ENCODE measurements at regions of chr1 and their contacts with region 1.

Region 1: DNA sequence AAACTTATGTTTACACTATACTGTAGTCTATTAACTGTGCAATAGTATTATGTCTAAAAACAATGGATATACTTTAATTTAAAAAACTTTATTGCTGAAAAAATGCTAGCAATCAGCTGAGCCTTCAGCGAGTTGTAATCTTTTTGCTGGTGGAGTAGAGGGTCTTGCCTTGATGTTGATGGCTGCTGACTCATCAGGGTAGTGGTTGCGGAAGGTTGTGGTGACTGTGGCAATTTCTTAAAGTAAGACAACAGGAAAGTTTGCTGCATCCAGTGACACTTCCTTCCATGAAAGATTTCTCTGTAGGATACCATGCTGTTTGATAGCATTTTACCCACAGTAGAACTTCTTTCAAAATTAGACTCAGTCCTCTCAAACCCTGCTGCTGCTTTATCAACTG is 234.7 kb upstream of the CSF3R start:
- DNase-seq: no peak
- ATAC-seq: no peak
- H3K4me3 Mint-ChIP-seq: no peak overlapping the region
- H3K27ac Mint-ChIP-seq: no peak overlapping the region
- H3K4me1 Mint-ChIP-seq: no peaks in the 10 kb centered on the region
- H3K27me3 Mint-ChIP-seq: peaks cover 20% of the 10 kb centered on the region
- CTCF ChIP-seq: no peak

Region 2: DNA sequence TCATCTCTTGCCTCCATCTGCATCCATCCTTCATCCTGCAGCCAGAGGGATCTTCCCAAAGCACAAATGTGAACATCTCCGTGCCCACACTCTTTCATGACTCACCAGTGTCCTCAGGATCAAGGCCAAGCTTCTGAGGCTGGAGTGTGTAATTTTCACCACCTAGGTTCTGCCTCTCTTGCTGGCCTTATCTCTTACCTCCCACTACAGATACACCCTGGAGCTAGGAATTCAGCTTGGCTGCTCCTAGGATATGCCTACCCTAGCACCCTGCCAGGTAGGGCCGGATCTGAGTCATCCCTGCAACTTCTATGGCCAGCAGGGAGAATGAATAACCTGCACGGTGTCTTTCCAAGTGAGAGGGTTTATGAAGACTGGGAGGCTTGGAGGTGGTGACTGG is 26.1 kb before region 1 on chr1:
- CTCF ChIA-PET with region 1: no interaction called
- POLR2A ChIA-PET with region 1: no interaction called
- intact Hi-C with region 1: no loop called
- DNase-seq: no peak
- ATAC-seq: no peak
- H3K4me3 Mint-ChIP-seq: no peak overlapping the region
- H3K27ac Mint-ChIP-seq: no peak overlapping the region
- H3K4me1 Mint-ChIP-seq: no peaks in the 10 kb centered on the region
- H3K27me3 Mint-ChIP-seq: peaks cover 25% of the 10 kb centered on the region
- CTCF ChIP-seq: no peak

Region 3: DNA sequence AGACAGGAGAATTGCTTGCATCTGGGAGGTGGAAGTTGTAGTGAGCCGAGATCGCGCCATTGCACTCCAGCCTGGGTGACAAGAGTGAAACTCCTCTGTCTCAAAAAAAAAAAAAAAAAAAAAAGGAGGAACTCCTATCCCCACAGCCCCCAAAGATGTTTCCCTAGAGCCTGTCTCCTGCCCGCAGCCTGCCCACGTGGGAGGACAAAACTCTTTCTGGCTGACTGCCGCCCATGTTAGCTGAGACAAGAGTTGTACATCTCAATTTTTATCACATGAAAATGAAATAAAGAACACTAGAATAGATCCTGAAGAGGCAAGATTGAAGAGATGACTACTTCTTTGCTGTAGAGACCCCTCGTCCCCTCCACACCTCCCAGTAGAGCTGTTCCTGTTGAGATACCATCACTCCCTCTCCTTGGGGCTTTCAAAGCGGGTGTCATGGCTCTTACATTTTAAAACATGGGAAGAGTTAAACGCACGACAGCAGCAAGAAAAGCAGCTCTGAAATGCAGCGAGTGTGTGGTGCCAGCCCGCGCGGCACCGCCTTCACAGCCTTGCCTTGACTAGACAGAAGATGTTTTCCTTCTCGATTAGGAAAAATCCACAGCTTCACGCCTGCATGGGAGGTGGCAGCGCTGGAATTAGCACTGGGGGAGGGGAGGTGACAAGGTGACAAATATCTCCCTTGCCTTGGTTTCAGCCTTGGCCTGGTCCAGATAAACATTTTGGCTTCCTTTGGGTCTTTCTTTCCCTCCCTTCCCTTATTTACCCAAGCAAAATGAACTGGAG is 18.7 kb after region 1 on chr1:
- CTCF ChIA-PET with region 1: no interaction called
- POLR2A ChIA-PET with region 1: no interaction called
- intact Hi-C with region 1: loop called (anchors 2 kb)
- DNase-seq: no peak
- ATAC-seq: no peak
- H3K4me3 Mint-ChIP-seq: no peak overlapping the region
- H3K27ac Mint-ChIP-seq: no peak overlapping the region
- H3K4me1 Mint-ChIP-seq: no peaks in the 10 kb centered on the region
- H3K27me3 Mint-ChIP-seq: peaks cover 42% of the 10 kb centered on the region
- CTCF ChIP-seq: no peak

Region 4: GRCh38 chr1:36752891-36753361 is 35.5 kb after region 1 on chr1:
- CTCF ChIA-PET with region 1: no interaction called
- POLR2A ChIA-PET with region 1: no interaction called
- intact Hi-C with region 1: no loop called
- DNase-seq: no peak
- ATAC-seq: no peak
- H3K4me3 Mint-ChIP-seq: no peak overlapping the region
- H3K27ac Mint-ChIP-seq: no peak overlapping the region
- H3K4me1 Mint-ChIP-seq: no peaks in the 10 kb centered on the region
- H3K27me3 Mint-ChIP-seq: peaks cover 16% of the 10 kb centered on the region
- CTCF ChIP-seq: no peak